Heart left ventricle (tissue), 16 donors: ENCODE measurements at regions of chr5 and their contacts with region 1.

Region 1: GRCh38 chr5:54302267-54302687 is 8.1 kb downstream of the ARL15 start:
- DNase-seq: no peak
- ATAC-seq: peak in 3 of 4 donors; percentile 19 to 61 (median 59)
- H3K4me3 ChIP-seq: no peak overlapping the region
- H3K27ac ChIP-seq: no peak overlapping the region
- H3K4me1 ChIP-seq: peaks cover 0 to 45% (median 25%) of the 10 kb centered on the region in 12 donors
- H3K27me3 ChIP-seq: no peaks in the 10 kb centered on the region
- CTCF ChIP-seq: no peak
- POLR2A ChIP-seq: no peak

Region 2: GRCh38 chr5:54254482-54255198 is 47.6 kb before region 1 on chr5:
- intact Hi-C with region 1: loop called in 2 of 10 experiments (anchors 5 kb)
- DNase-seq: peak in 2 of 5 donors; percentile 31 to 38
- ATAC-seq: peak; percentile 78 to 91 (median 88)
- H3K4me3 ChIP-seq: peak overlapping the region in 9 of 12 donors; percentile 17 to 38 (median 27)
- H3K27ac ChIP-seq: peak overlapping the region; percentile 15 to 73 (median 42)
- H3K4me1 ChIP-seq: peaks cover 0 to 60% (median 25%) of the 10 kb centered on the region in 12 donors
- H3K27me3 ChIP-seq: no peaks in the 10 kb centered on the region
- CTCF ChIP-seq: peak in 11 of 12 donors; percentile 7 to 67 (median 50)
- POLR2A ChIP-seq: no peak

Region 3: GRCh38 chr5:54263447-54263846 is 38.8 kb before region 1 on chr5:
- intact Hi-C with region 1: loop called in 3 of 10 experiments (anchors 5 kb)
- DNase-seq: no peak
- ATAC-seq: no peak
- H3K4me3 ChIP-seq: no peak overlapping the region
- H3K27ac ChIP-seq: no peak overlapping the region
- H3K4me1 ChIP-seq: peaks cover 0 to 38% (median 7%) of the 10 kb centered on the region in 12 donors
- H3K27me3 ChIP-seq: no peaks in the 10 kb centered on the region
- CTCF ChIP-seq: no peak
- POLR2A ChIP-seq: no peak